ENCODE measurements at regions of chr4 and their contacts with region 1.

Region 1: GRCh38 chr4:169437299-169438047 is 166.7 kb upstream of the SH3RF1 start:
- DNase-seq: peak; percentile 51
- CTCF ChIP-seq: no peak

Region 2: GRCh38 chr4:169485791-169486742 is 48.6 kb after region 1 on chr4:
- CTCF ChIA-PET with region 1: interaction called, 10 read pairs
- POLR2A ChIA-PET with region 1: no interaction called
- DNase-seq: peak; percentile 48
- CTCF ChIP-seq: peak; percentile 67

Region 3: GRCh38 chr4:169582205-169582604 is 144.7 kb after region 1 on chr4:
- CTCF ChIA-PET with region 1: no interaction called
- POLR2A ChIA-PET with region 1: no interaction called
- DNase-seq: no peak
- CTCF ChIP-seq: peak; percentile 4